ENCODE measurements at regions of chr16 and their contacts with region 1.

Region 1: GRCh38 chr16:88901718-88902337 is 35.4 kb upstream of the PABPN1L start:
- DNase-seq: no peak
- ATAC-seq: no peak
- H3K4me3 ChIP-seq: no peak overlapping the region
- H3K27ac ChIP-seq: no peak overlapping the region
- H3K4me1 ChIP-seq: peaks cover 34% of the 10 kb centered on the region
- H3K27me3 ChIP-seq: no peaks in the 10 kb centered on the region
- CTCF ChIP-seq: no peak

Region 2: DNA sequence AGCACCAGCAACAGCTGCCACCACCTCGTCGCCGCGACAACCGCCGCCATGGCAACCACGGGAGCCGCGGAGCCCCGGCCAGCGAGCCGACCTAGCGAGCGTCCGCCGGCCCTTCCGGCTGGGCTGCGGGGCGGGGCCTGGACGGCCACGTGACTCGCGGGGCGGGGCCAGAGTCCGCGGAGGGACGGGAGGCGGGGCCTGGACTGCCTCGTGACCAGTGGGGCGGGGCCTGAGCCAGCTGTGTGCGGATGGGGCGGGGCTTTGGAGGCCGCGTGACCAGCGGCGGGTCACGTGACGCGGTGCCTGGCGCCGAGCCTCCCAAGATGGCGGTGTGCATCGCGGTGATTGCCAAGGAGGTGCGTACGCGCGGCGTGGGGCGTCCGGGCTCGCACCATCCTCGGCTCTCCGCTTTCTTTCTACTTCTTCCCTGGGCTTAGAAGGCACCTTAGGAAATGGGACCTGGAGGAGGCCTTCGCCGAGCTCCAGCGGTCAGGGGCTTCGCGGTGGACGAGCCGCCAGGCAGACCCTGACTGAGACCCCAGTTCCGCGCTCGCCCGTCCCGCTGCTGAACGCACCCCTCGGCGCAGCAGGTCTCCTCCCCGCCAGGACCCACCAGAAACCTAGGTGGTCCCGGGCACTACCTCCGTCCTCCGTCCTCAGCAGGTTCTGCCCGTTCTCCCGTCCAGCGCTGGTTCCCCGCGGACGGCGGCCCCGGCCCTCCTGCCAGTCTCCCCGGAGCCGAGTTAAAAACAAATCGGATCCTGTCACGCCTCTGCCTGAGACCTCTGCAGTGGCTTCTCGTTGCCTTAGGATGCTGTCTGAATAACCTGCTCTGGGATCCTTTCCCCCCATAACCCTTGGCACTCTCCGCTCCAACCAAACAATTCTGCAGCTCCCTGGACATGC is 44.7 kb before region 1 on chr16 and contains the starts of genes GALNS and TRAPPC2L:
- intact Hi-C with region 1: loop called in 1 of 2 experiments (anchors 5 kb)
- DNase-seq: peak; percentile 99 to 100
- ATAC-seq: peak; percentile 95 to 99 (median 98)
- H3K4me3 ChIP-seq: peak within 1 kb of the TSS; percentile 93
- H3K27ac ChIP-seq: peak within 1 kb of the TSS; percentile 84
- H3K4me1 ChIP-seq: peaks cover 13% of the 10 kb centered on the region
- H3K27me3 ChIP-seq: no peaks in the 10 kb centered on the region
- CTCF ChIP-seq: no peak
- total RNA-seq, gene GALNS: 4.8 to 10.4 (median 9.7) TPM
- total RNA-seq, gene TRAPPC2L: 38.6 to 42.6 (median 38.7) TPM

Region 3: DNA sequence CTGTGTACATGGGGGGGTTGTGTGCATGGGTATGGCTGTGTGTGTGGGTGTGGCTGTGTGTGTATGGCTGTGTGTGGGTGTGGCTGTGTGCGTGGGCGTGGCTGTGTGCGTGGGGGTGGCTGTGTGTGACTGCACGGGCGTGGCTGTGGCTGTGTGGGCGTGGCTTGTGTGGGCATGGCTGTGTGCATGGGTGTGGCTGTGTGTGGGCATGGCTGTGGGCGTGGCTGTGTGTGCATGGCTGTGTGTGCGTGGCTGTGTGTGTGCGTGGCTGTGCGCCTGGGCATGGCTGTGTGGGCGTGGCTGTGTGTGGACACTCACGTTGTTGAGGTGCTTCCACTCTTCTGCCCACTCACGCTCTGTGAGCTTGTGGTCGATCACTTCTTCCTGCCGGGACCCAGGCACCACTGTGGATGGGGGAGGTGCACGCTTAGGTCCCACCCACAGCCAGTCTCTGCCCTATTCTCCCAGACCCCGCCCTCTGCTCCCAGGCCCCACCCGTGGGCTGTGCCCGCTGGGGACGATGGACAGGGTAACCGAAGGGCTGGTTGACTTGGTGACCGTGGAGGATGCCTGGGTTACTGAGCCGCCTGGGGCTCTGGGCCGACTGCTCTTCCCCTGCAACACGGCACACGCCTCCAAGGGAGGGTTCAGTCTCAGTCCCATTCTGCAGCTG is 19.3 kb before region 1 on chr16:
- intact Hi-C with region 1: loop called in 1 of 2 experiments (anchors 1 kb)
- DNase-seq: no peak
- ATAC-seq: no peak
- H3K4me3 ChIP-seq: no peak overlapping the region
- H3K27ac ChIP-seq: peak overlapping the region; percentile 97
- H3K4me1 ChIP-seq: peaks cover 47% of the 10 kb centered on the region
- H3K27me3 ChIP-seq: no peaks in the 10 kb centered on the region
- CTCF ChIP-seq: no peak